Vagina (tissue), 2 donors: ENCODE measurements at regions of chr7 and their contacts with region 1.

Region 1: GRCh38 chr7:26365077-26365900 is 73.6 kb downstream of the SNX10 start:
- DNase-seq: no peak
- H3K4me3 ChIP-seq: no peak overlapping the region
- H3K27ac ChIP-seq: no peak overlapping the region
- H3K4me1 ChIP-seq: no peaks in the 10 kb centered on the region
- H3K27me3 ChIP-seq: no peaks in the 10 kb centered on the region
- CTCF ChIP-seq: peak; percentile 38 to 77 (median 77)
- POLR2A ChIP-seq: no peak

Region 2: GRCh38 chr7:25894902-25895791 is 470.1 kb before region 1 on chr7:
- intact Hi-C with region 1: loop called (anchors 10 kb)
- DNase-seq: peak in 1 of 2 donors; percentile 82
- H3K4me3 ChIP-seq: peak overlapping the region in 1 of 2 donors; percentile 15
- H3K27ac ChIP-seq: no peak overlapping the region
- H3K4me1 ChIP-seq: peaks cover 16% of the 10 kb centered on the region
- H3K27me3 ChIP-seq: no peaks in the 10 kb centered on the region
- CTCF ChIP-seq: peak; percentile 30 to 57 (median 41)
- POLR2A ChIP-seq: no peak

Region 3: GRCh38 chr7:26083113-26083512 is 282.2 kb before region 1 on chr7:
- intact Hi-C with region 1: loop called (anchors 10 kb)
- DNase-seq: no peak
- H3K4me3 ChIP-seq: no peak overlapping the region
- H3K27ac ChIP-seq: no peak overlapping the region
- H3K4me1 ChIP-seq: no peaks in the 10 kb centered on the region
- H3K27me3 ChIP-seq: no peaks in the 10 kb centered on the region
- CTCF ChIP-seq: no peak
- POLR2A ChIP-seq: no peak

Region 4: GRCh38 chr7:27160546-27161213 is 795.4 kb after region 1 on chr7:
- intact Hi-C with region 1: loop called (anchors 5 kb)
- DNase-seq: no peak
- H3K4me3 ChIP-seq: peak overlapping the region; percentile 55 to 64
- H3K27ac ChIP-seq: peak overlapping the region; percentile 75
- H3K4me1 ChIP-seq: peaks cover 42% of the 10 kb centered on the region
- H3K27me3 ChIP-seq: no peaks in the 10 kb centered on the region
- CTCF ChIP-seq: peak; percentile 98 to 100 (median 99)
- POLR2A ChIP-seq: no peak